ENCODE measurements at regions of chr12 and their contacts with region 1.

Region 1: GRCh38 chr12:113221181-113221997 is at the start of gene TPCN1:
- DNase-seq: peak; percentile 100
- H3K4me3 Mint-ChIP-seq: peak within 1 kb of the TSS; percentile 93
- H3K27ac Mint-ChIP-seq: peak within 1 kb of the TSS; percentile 95
- H3K4me1 Mint-ChIP-seq: peaks cover 35% of the 10 kb centered on the region
- H3K27me3 Mint-ChIP-seq: no peaks in the 10 kb centered on the region
- total RNA-seq, gene TPCN1: 44.0 to 51.6 TPM

Region 2: DNA sequence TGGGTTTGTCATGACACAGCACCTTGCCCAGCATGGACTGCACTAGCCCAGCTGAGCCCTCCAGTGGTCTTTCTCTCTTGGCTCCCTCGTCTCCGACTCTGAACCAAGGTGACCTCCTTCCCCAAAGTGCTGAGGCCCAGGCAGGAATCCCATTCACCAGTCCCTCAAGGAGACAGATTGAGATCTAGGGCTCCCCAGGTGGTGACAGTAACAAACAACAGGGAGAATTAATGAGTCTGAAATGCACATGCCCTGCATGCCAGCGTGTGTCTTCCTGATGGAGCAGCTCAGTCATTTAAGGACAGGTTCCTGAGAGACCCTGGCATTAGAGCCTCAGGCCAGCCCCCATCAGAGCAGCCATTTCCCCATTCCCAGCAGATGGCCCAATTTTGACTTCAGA is 366.0 kb before region 1 on chr12:
- CTCF ChIA-PET with region 1: no interaction called
- POLR2A ChIA-PET with region 1: no interaction called
- intact Hi-C with region 1: no loop called
- DNase-seq: no peak
- H3K4me3 Mint-ChIP-seq: no peak overlapping the region
- H3K27ac Mint-ChIP-seq: no peak overlapping the region
- H3K4me1 Mint-ChIP-seq: peaks cover 2% of the 10 kb centered on the region
- H3K27me3 Mint-ChIP-seq: peaks cover 20% of the 10 kb centered on the region

Region 3: DNA sequence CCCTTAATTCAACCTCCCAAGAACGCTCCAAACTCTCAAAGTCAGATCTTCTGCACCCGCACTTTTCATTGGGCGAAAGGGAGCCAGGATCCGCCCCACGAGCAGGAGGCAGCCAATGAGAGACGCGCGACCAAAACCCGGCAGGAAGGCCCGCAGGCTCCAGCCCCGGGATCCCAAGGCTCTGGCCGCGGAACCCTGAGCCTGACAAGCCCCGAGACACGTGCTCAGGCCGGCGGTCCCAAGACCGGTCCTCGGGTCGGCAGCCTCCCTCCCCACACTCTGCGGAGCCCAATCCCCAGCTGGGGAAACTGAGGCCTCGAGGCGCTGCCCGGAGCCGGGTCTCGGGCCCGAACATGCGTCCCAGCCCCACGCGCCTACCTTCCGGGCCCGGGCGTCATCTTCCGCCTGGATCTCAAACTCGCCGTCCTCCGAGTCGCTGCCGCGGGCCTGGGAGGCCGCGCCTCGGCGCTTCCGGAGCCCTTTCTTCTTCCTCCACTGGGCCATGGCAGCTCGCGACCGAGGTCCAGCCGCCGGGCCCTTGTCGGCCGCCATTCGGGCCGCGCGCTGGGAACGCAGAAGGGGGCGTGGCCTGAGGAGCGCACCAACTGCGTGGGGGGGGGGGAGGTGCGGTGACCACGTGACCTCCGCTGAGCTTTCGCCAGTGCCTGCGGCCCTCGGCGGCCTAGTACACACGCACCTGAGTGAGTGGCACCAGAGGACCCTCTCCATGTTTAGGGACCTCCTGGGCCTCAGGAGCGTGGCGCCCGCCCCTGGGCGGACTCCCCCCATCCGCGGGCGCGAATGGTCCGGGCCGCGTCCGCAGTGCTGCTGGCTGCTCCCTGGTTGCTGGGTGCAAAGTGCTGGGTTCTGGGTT is 36.3 kb before region 1 on chr12 and contains the starts of genes DDX54 and RITA1:
- CTCF ChIA-PET with region 1: interaction called, 4 read pairs
- POLR2A ChIA-PET with region 1: interaction called, 13 read pairs
- intact Hi-C with region 1: loop called (anchors 1 kb)
- DNase-seq: peak; percentile 93
- H3K4me3 Mint-ChIP-seq: peak within 1 kb of the TSS; percentile 94
- H3K27ac Mint-ChIP-seq: peak within 1 kb of the TSS; percentile 93
- H3K4me1 Mint-ChIP-seq: peaks cover 24% of the 10 kb centered on the region
- H3K27me3 Mint-ChIP-seq: no peaks in the 10 kb centered on the region
- total RNA-seq, gene DDX54: 107 to 109 TPM
- total RNA-seq, gene RITA1: 18.7 to 22.0 TPM

Region 4: DNA sequence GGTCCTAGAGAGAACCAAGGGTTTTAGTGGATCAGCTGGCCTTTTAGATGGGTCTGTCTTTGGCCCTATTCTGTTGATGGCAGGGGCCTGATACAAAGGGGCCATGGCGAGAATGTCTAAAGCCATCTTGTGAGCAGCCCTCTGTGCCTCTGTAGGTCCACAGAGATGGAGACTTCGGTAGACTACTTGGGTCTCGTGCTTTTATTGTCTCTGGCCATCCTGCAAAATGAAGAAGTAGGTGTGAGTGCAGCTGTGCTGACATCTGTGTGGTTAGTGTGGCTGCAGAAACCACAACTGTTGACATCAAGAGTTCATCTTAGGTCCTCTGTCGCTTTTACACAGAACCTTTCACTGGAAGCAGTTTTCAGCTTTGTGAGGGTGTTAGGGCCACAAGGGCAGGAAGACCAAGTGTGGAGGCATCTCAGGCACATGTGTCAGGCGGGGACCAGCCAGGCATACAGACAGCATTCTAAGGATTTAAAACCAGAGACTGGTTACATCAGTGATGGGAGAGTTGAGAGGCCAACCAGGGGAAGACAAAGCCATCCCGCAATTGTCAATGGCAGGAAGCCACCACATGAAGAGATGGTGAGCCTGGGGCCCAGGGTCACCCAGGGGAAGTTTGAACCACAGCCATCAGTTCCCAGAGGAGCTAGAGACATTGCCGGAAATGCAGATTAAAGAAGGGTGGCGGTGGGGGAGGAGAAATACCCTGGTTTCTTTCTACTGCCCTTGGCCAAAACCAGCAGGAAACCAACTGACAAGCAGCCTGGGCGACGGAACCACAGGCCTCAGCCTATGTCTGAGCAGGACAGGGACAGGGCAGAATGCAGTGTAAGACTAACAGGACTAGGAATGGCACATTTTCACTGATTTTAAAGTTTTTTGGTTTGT is 13.1 kb before region 1 on chr12:
- CTCF ChIA-PET with region 1: interaction called, 4 read pairs
- POLR2A ChIA-PET with region 1: interaction called, 38 read pairs
- intact Hi-C with region 1: loop called (anchors 1 kb)
- DNase-seq: peak; percentile 86
- H3K4me3 Mint-ChIP-seq: peak overlapping the region; percentile 38
- H3K27ac Mint-ChIP-seq: peak overlapping the region; percentile 91
- H3K4me1 Mint-ChIP-seq: peaks cover 50% of the 10 kb centered on the region
- H3K27me3 Mint-ChIP-seq: no peaks in the 10 kb centered on the region

Region 5: GRCh38 chr12:113239811-113240331 is 18.5 kb after region 1 on chr12:
- CTCF ChIA-PET with region 1: no interaction called
- POLR2A ChIA-PET with region 1: no interaction called
- intact Hi-C with region 1: no loop called
- DNase-seq: no peak
- H3K4me3 Mint-ChIP-seq: no peak overlapping the region
- H3K27ac Mint-ChIP-seq: no peak overlapping the region
- H3K4me1 Mint-ChIP-seq: peaks cover 7% of the 10 kb centered on the region
- H3K27me3 Mint-ChIP-seq: no peaks in the 10 kb centered on the region

Region 6: DNA sequence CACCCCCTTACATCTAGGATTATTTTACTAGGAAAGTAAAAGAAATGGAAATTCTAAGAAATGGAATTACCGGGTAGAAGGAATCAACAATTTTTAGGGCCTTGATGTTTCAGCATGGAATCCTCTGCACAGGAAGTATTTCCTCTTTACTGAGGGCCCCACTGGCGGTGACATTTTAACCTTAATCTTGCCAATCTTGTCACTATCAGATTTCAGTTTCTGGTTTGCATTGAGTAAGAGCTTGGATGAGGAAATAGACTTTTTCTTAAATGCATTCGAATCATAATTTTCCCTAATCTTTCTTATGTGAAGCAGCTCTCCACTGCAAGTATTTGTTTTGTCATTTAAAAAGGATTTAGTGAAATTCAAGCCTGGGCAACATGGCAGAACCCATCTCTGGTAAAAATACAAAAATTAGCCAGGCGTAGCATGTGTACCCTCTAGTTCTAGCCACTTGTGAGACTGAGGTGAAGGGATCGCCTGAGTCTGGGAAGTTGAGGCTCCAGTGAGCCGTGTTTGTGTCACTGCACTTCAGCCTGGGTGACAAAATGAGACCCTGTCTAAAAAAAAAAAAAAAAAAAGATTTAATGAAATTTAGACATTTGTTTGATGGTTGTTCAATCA is 40.6 kb after region 1 on chr12:
- CTCF ChIA-PET with region 1: no interaction called
- POLR2A ChIA-PET with region 1: interaction called, 5 read pairs
- intact Hi-C with region 1: loop called (anchors 2 kb)
- DNase-seq: peak; percentile 64
- H3K4me3 Mint-ChIP-seq: no peak overlapping the region
- H3K27ac Mint-ChIP-seq: peak overlapping the region; percentile 51
- H3K4me1 Mint-ChIP-seq: peaks cover 46% of the 10 kb centered on the region
- H3K27me3 Mint-ChIP-seq: no peaks in the 10 kb centered on the region

Region 7: GRCh38 chr12:113358381-113359132 is 137.2 kb after region 1 on chr12 and contains the start of gene PLBD2:
- CTCF ChIA-PET with region 1: no interaction called
- POLR2A ChIA-PET with region 1: no interaction called
- intact Hi-C with region 1: loop called (anchors 2 kb)
- DNase-seq: peak; percentile 97
- H3K4me3 Mint-ChIP-seq: peak within 1 kb of the TSS; percentile 82
- H3K27ac Mint-ChIP-seq: peak within 1 kb of the TSS; percentile 88
- H3K4me1 Mint-ChIP-seq: peaks cover 13% of the 10 kb centered on the region
- H3K27me3 Mint-ChIP-seq: no peaks in the 10 kb centered on the region
- total RNA-seq, gene PLBD2: 18.3 to 18.8 TPM

Measured in activated CD4-positive, alpha-beta memory T cell treated with anti-CD3 and anti-CD28 coated beads for 36 hours (primary cell).